Heart left ventricle (tissue), 16 donors: ENCODE measurements at regions of chr12 and their contacts with region 1.

Region 1: GRCh38 chr12:121536899-121537813 is 43.7 kb downstream of the KDM2B start:
- DNase-seq: peak; percentile 92 to 94 (median 93)
- ATAC-seq: peak; percentile 68 to 87 (median 84)
- H3K4me3 ChIP-seq: peak overlapping the region; percentile 35 to 92 (median 78)
- H3K27ac ChIP-seq: peak overlapping the region; percentile 93 to 98 (median 96)
- H3K4me1 ChIP-seq: peaks cover 0 to 66% (median 49%) of the 10 kb centered on the region in 12 donors
- H3K27me3 ChIP-seq: no peaks in the 10 kb centered on the region
- CTCF ChIP-seq: peak in 1 of 12 donors; percentile 4
- POLR2A ChIP-seq: peak in 1 of 2 donors; percentile 63

Region 2: GRCh38 chr12:121499929-121500793 is 37.0 kb before region 1 on chr12:
- intact Hi-C with region 1: loop called in 5 of 10 experiments (anchors 1 to 5 kb)
- DNase-seq: peak; percentile 70 to 87 (median 79)
- ATAC-seq: peak; percentile 81 to 90 (median 84)
- H3K4me3 ChIP-seq: peak overlapping the region in 9 of 12 donors; percentile 25 to 52 (median 38)
- H3K27ac ChIP-seq: peak overlapping the region; percentile 20 to 87 (median 72)
- H3K4me1 ChIP-seq: peaks cover 0 to 21% (median 9%) of the 10 kb centered on the region in 12 donors
- H3K27me3 ChIP-seq: no peaks in the 10 kb centered on the region
- CTCF ChIP-seq: peak in 11 of 12 donors; percentile 97 to 99 (median 99)
- POLR2A ChIP-seq: no peak

Region 3: DNA sequence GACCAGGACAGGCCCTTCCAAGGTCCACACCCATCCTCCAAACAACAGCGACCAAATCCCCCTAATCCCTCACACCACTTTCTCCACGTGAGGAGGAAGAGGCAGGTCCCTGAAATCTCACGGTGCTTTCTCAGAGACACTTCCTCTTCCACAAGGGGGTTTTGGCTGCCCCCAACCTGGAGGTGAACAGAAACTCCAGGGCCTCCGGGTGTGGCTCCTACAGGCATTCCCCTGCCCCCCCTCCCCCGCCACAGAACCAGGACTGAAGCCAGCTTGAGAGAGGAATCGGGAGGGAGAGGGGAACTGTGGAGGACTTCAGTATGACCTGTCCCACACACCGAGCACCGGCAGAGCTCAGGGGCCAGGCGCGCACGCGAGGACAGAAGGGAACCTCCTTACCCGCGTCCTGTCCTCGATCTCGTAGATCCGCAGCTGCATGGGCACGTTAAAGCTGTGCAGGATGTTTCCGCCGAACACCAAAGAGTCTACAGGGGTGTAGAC is 16.5 kb before region 1 on chr12:
- intact Hi-C with region 1: loop called in 1 of 10 experiments (anchors 1 kb)
- DNase-seq: no peak
- ATAC-seq: peak in 3 of 4 donors; percentile 17 to 59 (median 19)
- H3K4me3 ChIP-seq: peak overlapping the region in 2 of 12 donors; percentile 7 to 8
- H3K27ac ChIP-seq: peak overlapping the region in 9 of 12 donors; percentile 13 to 57 (median 25)
- H3K4me1 ChIP-seq: peaks cover 0 to 20% (median 5%) of the 10 kb centered on the region in 12 donors
- H3K27me3 ChIP-seq: no peaks in the 10 kb centered on the region
- CTCF ChIP-seq: no peak
- POLR2A ChIP-seq: no peak

Region 4: DNA sequence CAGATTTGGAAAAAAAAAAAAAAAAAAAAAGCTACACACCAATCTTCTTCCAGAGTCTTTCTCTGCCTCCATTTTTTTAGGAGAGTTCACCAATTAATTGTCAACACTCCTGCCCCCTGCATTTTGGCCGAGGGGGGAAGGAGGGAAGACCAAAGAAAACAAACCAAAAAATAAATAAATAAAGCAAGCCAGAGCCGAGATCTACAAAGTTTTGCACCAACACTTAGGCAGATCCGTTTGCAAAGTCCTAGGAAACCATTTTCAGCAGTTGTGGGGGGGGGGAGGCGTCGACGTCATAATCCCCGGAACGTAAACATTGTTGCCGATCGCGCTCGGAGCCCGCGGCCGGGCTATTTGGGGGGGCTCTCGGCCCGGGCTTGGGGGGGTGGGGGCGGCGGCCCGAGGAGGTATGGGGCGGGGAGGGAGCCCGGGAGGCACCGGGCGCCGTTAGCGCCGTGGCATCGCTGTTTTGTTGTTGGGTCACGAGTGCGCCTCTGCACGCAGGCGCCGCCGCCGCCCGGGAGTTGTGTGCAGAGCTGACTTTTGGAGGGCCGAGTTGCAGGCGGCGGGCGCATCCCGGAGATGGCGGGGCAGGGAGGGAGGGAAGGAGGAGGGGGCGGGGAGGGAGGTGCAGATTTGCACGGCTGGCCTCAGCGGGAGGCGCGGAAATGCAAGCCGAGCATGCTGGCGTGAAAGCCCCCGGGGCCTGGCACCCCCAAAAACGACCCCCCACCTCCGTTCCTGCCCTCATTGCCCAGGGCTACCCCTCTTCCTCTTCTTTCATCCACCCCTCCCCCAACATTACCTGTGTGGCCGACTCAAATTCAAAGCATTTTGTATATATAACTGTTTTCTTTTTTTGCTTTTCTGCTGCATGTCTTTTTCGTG is 43.1 kb after region 1 on chr12:
- intact Hi-C with region 1: loop called in 2 of 10 experiments (anchors 5 kb)
- DNase-seq: peak; percentile 69 to 87 (median 77)
- ATAC-seq: peak; percentile 28 to 77 (median 69)
- H3K4me3 ChIP-seq: peak overlapping the region; percentile 61 to 81 (median 74)
- H3K27ac ChIP-seq: peak overlapping the region; percentile 17 to 91 (median 84)
- H3K4me1 ChIP-seq: peaks cover 0 to 58% (median 31%) of the 10 kb centered on the region in 12 donors
- H3K27me3 ChIP-seq: no peaks in the 10 kb centered on the region
- CTCF ChIP-seq: no peak
- POLR2A ChIP-seq: no peak

Region 5: DNA sequence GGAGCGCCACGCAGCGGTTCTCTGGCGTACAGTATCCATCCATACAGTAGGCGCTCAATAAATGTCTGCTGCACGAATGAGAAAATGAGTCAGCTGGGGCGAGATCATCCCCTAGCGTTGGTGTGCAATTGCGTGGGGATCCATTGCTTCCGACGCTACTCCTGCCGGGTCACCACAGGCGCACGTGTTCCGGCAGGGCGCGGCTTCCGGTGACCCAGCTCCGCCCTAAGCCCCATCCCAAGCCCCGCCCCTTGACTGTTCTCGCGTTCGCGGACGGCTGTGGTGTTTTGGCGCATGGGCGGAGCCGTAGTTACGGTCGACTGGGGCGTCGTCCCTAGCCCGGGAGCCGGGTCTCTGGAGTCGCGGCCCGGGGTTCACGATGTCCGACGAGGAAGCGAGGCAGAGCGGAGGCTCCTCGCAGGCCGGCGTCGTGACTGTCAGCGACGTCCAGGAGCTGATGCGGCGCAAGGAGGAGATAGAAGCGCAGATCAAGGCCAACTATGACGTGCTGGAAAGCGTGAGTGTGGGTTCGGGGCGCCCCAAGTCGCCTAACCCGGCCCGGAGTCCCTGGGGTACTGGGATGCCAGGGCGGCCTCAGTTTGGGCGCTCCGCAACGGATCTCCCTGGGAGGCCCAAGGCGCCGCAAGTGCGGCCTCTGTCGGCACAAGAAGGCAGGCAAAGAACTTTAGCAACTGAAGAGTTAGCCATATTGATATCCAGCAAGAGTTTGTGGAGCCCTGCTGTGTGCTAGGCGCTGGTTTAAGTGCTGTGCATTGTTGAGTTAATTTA is 351.5 kb after region 1 on chr12 and contains the start of gene PSMD9:
- intact Hi-C with region 1: no loop called
- DNase-seq: peak; percentile 98 to 99 (median 98)
- ATAC-seq: peak; percentile 99 to 100 (median 99)
- H3K4me3 ChIP-seq: peak within 1 kb of the TSS; percentile 52 to 94 (median 84)
- H3K27ac ChIP-seq: peak within 1 kb of the TSS; percentile 87 to 98 (median 94)
- H3K4me1 ChIP-seq: peaks cover 3 to 33% (median 17%) of the 10 kb centered on the region in 12 donors
- H3K27me3 ChIP-seq: no peaks in the 10 kb centered on the region
- CTCF ChIP-seq: peak; percentile 42 to 81 (median 62)
- POLR2A ChIP-seq: peak in 1 of 2 donors; percentile 73
- total RNA-seq, gene PSMD9: 28.8 to 47.8 (median 37.9) TPM